Mammary epithelial cell (primary cell): ENCODE measurements at regions of chr16 and their contacts with region 1.

Region 1: DNA sequence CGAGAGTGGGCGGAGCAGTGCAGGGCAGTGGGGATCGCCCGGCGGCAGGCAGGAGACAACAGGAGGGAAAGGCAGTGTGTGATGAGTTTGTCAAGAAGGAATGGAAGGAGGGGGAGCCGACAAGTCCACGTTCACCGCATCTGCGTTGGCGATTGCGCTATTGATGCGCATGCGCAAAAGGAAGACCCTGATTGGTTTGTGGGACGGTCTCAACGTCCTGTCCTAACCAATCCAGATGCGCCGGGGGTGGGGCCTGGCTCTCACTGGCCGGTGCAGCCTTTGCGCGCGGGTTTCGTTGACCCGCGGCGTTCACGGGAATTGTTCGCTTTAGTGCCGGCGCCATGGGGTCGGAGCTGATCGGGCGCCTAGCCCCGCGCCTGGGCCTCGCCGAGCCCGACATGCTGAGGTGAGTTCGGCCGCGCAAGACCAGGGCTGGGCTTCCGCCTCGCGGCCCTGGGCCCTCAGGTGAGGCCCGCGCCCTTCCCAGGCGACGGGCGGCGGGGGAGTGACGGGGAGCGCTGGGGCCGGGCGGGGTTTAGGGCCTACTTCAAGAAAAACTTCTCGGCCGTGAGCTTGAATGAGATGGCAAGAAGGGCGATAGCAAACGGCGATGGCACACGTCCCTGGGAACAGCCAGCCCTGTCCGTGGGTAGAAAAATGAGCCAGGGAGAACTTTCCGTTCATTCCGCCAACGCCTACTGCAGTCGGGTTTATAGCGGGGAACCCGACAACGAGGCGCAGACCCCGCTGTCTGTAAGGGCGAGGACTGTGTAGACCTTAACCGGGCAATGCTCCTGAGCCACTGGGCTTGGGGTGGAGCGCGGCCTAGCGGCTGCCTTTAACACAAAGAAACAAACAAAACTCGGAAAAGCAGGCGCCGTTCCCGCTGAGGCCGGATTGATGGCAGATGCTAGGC is at the start of gene ORC6:
- DNase-seq: peak; percentile 95
- H3K4me3 ChIP-seq: peak within 1 kb of the TSS; percentile 81 to 98 (median 90)
- H3K27ac ChIP-seq: peak within 1 kb of the TSS; percentile 80
- H3K4me1 ChIP-seq: peaks cover 21% of the 10 kb centered on the region
- H3K27me3 ChIP-seq: no peaks in the 10 kb centered on the region
- CTCF ChIP-seq: peak; percentile 48 to 77
- total RNA-seq, gene ORC6: 2.8 to 28.2 TPM

Region 2: GRCh38 chr16:46629331-46630219 is 60.0 kb before region 1 on chr16:
- CTCF ChIA-PET with region 1: interaction called, 6 read pairs
- dilution Hi-C with region 1: no loop called
- in situ Hi-C with region 1: no loop called
- intact Hi-C with region 1: loop called (anchors 2 kb)
- DNase-seq: peak; percentile 50
- H3K4me3 ChIP-seq: no peak overlapping the region
- H3K27ac ChIP-seq: no peak overlapping the region
- H3K4me1 ChIP-seq: no peaks in the 10 kb centered on the region
- H3K27me3 ChIP-seq: no peaks in the 10 kb centered on the region
- CTCF ChIP-seq: peak; percentile 51 to 58

Region 3: GRCh38 chr16:46789499-46790414 is 100.1 kb after region 1 on chr16:
- CTCF ChIA-PET with region 1: no interaction called
- dilution Hi-C with region 1: loop called (anchors 5 kb)
- in situ Hi-C with region 1: no loop called
- intact Hi-C with region 1: no loop called
- DNase-seq: peak; percentile 42
- H3K4me3 ChIP-seq: peak overlapping the region; percentile 41 to 82 (median 64)
- H3K27ac ChIP-seq: no peak overlapping the region
- H3K4me1 ChIP-seq: peaks cover 9% of the 10 kb centered on the region
- H3K27me3 ChIP-seq: no peaks in the 10 kb centered on the region
- CTCF ChIP-seq: no peak

Region 4: GRCh38 chr16:46801428-46802049 is 111.9 kb after region 1 on chr16:
- CTCF ChIA-PET with region 1: no interaction called
- dilution Hi-C with region 1: no loop called
- in situ Hi-C with region 1: no loop called
- intact Hi-C with region 1: loop called (anchors 1 kb)
- DNase-seq: no peak
- H3K4me3 ChIP-seq: no peak overlapping the region
- H3K27ac ChIP-seq: no peak overlapping the region
- H3K4me1 ChIP-seq: no peaks in the 10 kb centered on the region
- H3K27me3 ChIP-seq: no peaks in the 10 kb centered on the region
- CTCF ChIP-seq: peak; percentile 20 to 51

Region 5: GRCh38 chr16:46830902-46831647 is 141.5 kb after region 1 on chr16 and contains the start of gene C16orf87:
- CTCF ChIA-PET with region 1: no interaction called
- dilution Hi-C with region 1: no loop called
- in situ Hi-C with region 1: no loop called
- intact Hi-C with region 1: loop called (anchors 2 kb)
- DNase-seq: peak; percentile 88
- H3K4me3 ChIP-seq: peak within 1 kb of the TSS; percentile 80 to 96 (median 81)
- H3K27ac ChIP-seq: peak within 1 kb of the TSS; percentile 82
- H3K4me1 ChIP-seq: peaks cover 8% of the 10 kb centered on the region
- H3K27me3 ChIP-seq: no peaks in the 10 kb centered on the region
- CTCF ChIP-seq: no peak
- total RNA-seq, gene C16orf87: 8.0 to 12.3 TPM